Lower lobe of right lung (tissue), 2 donors: ENCODE measurements at regions of chr5 and their contacts with region 1.

Region 1: DNA sequence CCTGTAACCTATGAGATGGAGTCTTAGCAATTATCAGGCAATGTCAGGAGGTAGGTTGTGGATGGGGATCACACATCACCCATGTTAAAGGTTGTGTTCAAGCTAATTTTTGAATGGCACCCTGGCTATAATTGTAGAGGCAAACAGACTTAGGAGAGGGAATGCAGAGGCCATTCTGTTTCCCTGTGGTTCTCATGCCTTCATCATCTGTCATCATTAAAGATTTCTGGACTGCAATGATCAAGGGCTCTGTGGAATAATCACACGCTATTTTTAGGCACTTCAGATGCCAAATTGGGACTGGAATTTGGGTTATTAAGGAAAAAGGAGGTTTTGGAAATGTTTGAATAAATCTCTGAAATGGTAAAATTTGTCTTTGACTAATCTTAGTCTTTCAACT is 1065.4 kb downstream of the TAF11L14 start:
- DNase-seq: no peak
- ATAC-seq: no peak
- H3K4me3 ChIP-seq: no peak overlapping the region
- H3K27ac ChIP-seq: no peak overlapping the region
- H3K4me1 ChIP-seq: no peaks in the 10 kb centered on the region
- H3K27me3 ChIP-seq: no peaks in the 10 kb centered on the region
- CTCF ChIP-seq: no peak

Region 2: DNA sequence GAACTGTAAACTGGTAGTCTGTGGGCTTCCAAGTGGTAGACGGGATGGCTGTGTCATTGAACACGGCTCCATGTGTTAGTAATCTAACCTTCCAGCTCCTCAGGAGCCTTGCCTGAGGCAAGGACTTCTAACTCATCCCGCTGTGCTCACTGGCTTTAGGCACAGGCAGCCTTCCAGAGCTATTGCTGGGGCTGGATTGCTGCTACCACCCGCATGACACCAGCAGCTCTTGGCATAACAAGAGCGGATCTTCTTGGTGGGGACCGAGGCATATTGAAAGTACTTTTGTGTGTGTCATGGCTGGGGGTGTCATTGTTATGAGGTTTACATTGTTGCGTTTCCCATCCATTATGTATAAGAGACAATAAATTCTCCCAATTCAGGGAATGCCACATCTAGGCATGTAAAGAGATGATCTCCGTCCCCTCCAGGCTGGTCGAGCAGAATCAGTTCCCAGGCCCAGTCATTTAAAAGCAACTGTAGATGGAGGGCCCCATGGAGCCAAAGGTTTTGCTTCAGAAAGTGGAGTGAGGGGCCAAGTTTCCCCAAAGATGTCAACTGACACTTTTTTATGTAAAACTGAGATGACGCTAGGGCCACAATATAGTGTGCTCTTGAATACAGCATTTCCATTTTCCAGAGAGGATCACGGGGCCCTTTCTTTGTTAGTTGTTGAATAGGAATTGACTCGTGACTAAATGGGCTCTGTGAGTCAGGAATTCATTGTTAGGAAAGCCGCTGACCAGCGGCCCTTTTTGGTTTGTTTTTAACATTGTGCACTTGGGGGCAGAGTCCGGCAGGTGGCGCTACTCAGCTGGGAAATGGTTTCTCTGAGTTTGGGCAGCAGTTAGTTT is 305.9 kb before region 1 on chr5:
- intact Hi-C with region 1: loop called (anchors 10 kb)
- DNase-seq: peak; percentile 66
- ATAC-seq: peak; percentile 78 to 83
- H3K4me3 ChIP-seq: no peak overlapping the region
- H3K27ac ChIP-seq: no peak overlapping the region
- H3K4me1 ChIP-seq: no peaks in the 10 kb centered on the region
- H3K27me3 ChIP-seq: no peaks in the 10 kb centered on the region
- CTCF ChIP-seq: peak; percentile 70

Region 3: DNA sequence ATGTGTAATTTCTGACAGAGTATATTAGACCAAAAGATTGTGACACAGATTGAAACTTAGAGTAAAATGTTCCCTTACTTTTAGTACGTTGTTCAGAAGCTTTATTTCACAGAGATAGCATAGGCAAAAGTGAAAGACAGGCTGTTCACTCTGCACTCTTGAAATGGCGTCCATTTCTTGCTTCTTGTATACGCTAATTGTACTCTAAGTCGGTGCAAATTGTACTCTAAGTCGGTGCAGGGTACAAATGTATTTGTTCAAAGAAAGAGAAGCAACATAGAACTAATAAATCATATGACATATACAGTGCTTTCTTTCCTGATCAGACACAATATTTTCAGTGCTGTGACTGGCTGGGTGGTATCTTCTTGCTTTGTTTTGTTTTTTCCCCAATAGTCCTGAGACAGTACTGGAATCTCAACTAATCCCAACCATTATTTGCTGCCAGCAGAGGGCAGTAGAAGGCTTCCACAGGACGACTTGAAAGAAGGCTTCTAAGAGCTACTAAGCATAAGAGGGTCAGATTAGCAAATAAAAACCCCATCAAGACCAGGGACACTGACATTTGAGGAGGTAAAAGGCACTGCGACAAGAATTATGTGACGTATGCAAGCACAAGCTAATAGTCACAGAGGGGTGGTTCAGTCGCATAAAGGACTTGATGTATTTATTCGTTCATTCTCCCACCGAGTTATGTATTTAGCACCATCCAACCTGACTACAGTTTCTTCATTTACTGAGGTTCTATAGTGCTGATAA is 233.7 kb before region 1 on chr5:
- intact Hi-C with region 1: loop called (anchors 10 kb)
- DNase-seq: no peak
- ATAC-seq: peak; percentile 71 to 88
- H3K4me3 ChIP-seq: no peak overlapping the region
- H3K27ac ChIP-seq: no peak overlapping the region
- H3K4me1 ChIP-seq: no peaks in the 10 kb centered on the region
- H3K27me3 ChIP-seq: no peaks in the 10 kb centered on the region
- CTCF ChIP-seq: peak; percentile 68